PC-9 (cell line): ENCODE measurements at regions of chr16 and their contacts with region 1.

Region 1: GRCh38 chr16:67364600-67365235 is 28.6 kb downstream of the TPPP3 start:
- DNase-seq: no peak
- H3K4me3 ChIP-seq: no peak overlapping the region
- H3K27ac ChIP-seq: no peak overlapping the region
- H3K4me1 ChIP-seq: no peaks in the 10 kb centered on the region
- H3K27me3 ChIP-seq: peaks cover 24% of the 10 kb centered on the region
- CTCF ChIP-seq: no peak

Region 2: DNA sequence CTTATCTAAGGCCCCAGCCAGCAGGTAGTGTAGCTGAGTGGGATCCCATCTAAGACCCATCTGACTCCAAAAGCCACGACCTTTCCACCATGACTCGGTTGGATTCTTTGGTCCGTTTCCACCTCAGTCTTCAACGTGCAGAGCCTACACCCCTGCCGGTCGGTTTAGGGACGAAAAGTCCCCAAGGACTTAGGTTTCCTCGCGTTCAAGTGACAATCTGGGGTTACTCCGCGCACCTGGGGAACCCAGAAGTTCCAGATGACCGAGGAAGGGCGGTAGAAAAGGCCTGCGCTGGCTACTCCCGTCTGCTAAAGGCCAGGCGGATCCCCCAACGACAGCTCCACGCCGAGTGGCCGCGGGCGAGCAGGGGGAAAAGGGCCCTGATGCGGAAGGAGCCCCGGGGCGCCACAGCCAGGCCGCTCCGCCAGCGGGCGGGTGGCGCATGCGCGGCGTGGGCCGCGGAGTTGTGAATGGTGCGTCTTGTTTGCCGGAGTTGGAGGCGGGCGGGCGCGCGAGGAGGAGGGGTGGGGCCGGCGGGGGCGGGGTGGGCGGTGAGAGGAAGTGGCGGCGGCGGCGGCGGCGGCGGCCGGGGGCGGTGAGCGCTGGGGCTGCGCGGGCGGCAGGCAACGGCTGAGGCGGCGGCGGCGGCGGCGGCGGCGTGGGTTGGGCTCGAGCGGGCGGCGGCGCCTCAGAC is 336.0 kb before region 1 on chr16 and contains the start of gene CBFB:
- CTCF ChIA-PET with region 1: no interaction called
- POLR2A ChIA-PET with region 1: interaction called, 14 read pairs
- intact Hi-C with region 1: no loop called
- DNase-seq: peak; percentile 72 to 92
- H3K4me3 ChIP-seq: peak within 1 kb of the TSS; percentile 67
- H3K27ac ChIP-seq: peak within 1 kb of the TSS; percentile 56
- H3K4me1 ChIP-seq: peaks cover 18% of the 10 kb centered on the region
- H3K27me3 ChIP-seq: no peaks in the 10 kb centered on the region
- CTCF ChIP-seq: peak; percentile 30; the same call in 1 of the 2 replicates
- total RNA-seq, gene CBFB: 58.7 and 63.3 TPM in 2 replicates

Region 3: DNA sequence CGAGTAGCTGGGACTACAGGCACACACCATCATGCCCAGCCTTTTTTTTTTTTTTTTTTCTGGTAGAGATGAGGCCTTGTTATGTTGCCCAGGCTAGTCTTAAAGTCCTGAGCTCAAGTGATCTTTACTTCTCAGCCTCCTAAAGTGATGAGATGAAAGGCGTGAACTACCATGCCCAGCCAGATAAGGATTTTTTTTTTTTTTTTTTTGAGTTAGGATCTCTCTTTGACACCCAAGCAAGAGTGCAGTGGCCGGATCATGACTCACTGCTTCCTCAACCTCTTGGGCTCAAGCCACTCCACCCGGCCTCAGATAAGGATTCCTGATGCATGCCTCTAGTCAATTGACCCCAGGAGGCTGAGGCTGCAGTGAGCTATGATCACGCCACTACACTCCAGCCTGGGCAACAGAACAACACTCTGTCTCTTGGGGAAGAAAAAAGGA is 96.6 kb before region 1 on chr16:
- CTCF ChIA-PET with region 1: no interaction called
- POLR2A ChIA-PET with region 1: no interaction called
- intact Hi-C with region 1: no loop called
- DNase-seq: peak; percentile 83 to 87
- H3K4me3 ChIP-seq: no peak overlapping the region
- H3K27ac ChIP-seq: no peak overlapping the region
- H3K4me1 ChIP-seq: peaks cover 18% of the 10 kb centered on the region
- H3K27me3 ChIP-seq: no peaks in the 10 kb centered on the region
- CTCF ChIP-seq: no peak

Region 4: GRCh38 chr16:67326472-67327309 is 38.0 kb before region 1 on chr16 and contains the starts of genes KCTD19 and LRRC36:
- CTCF ChIA-PET with region 1: no interaction called
- POLR2A ChIA-PET with region 1: interaction called, 15 read pairs
- intact Hi-C with region 1: no loop called
- DNase-seq: no peak
- H3K4me3 ChIP-seq: no peak within 1 kb of the TSS
- H3K27ac ChIP-seq: no peak within 1 kb of the TSS
- H3K4me1 ChIP-seq: no peaks in the 10 kb centered on the region
- H3K27me3 ChIP-seq: no peaks in the 10 kb centered on the region
- CTCF ChIP-seq: no peak
- total RNA-seq, gene KCTD19: 0.35 TPM in 1 of 2 replicates, not detected in the other
- total RNA-seq, gene LRRC36: not detected in 2 replicates

Region 5: GRCh38 chr16:67339453-67339852 is 25.3 kb before region 1 on chr16:
- CTCF ChIA-PET with region 1: interaction called, 3 read pairs
- POLR2A ChIA-PET with region 1: interaction called, 15 read pairs
- intact Hi-C with region 1: no loop called
- DNase-seq: no peak
- H3K4me3 ChIP-seq: no peak overlapping the region
- H3K27ac ChIP-seq: no peak overlapping the region
- H3K4me1 ChIP-seq: no peaks in the 10 kb centered on the region
- H3K27me3 ChIP-seq: no peaks in the 10 kb centered on the region
- CTCF ChIP-seq: no peak